Thyroid gland (tissue), 4 donors: ENCODE measurements at regions of chr14 and their contacts with region 1.

Region 1: GRCh38 chr14:77799863-77800730 is at the start of gene ADCK1:
- DNase-seq: peak; percentile 98
- H3K4me3 ChIP-seq: peak within 1 kb of the TSS; percentile 50 to 83 (median 63)
- H3K27ac ChIP-seq: peak within 1 kb of the TSS; percentile 76 to 93 (median 90)
- H3K4me1 ChIP-seq: peaks cover 5 to 20% of the 10 kb centered on the region in 2 donors
- H3K27me3 ChIP-seq: no peaks in the 10 kb centered on the region
- CTCF ChIP-seq: peak in 4 of 6 experiments; percentile 50 to 71 (median 64)
- POLR2A ChIP-seq: peak in 1 of 2 donors; percentile 73
- total RNA-seq, gene ADCK1: 4.0 to 13.5 (median 12.1) TPM

Region 2: GRCh38 chr14:77760381-77761246 is 39.5 kb before region 1 on chr14 and contains the start of gene SNW1:
- intact Hi-C with region 1: loop called (anchors 5 kb)
- DNase-seq: peak; percentile 92 to 94
- H3K4me3 ChIP-seq: peak within 1 kb of the TSS; percentile 43 to 100 (median 75)
- H3K27ac ChIP-seq: peak within 1 kb of the TSS; percentile 87 to 94 (median 91)
- H3K4me1 ChIP-seq: peaks cover 22 to 29% of the 10 kb centered on the region in 2 donors
- H3K27me3 ChIP-seq: no peaks in the 10 kb centered on the region
- CTCF ChIP-seq: no peak
- POLR2A ChIP-seq: peak; percentile 7 to 75
- total RNA-seq, gene SNW1: 53.9 to 85.5 (median 67.8) TPM

Region 3: GRCh38 chr14:77862154-77862786 is 62.2 kb after region 1 on chr14:
- intact Hi-C with region 1: no loop called
- DNase-seq: peak; percentile 79 to 82
- H3K4me3 ChIP-seq: no peak overlapping the region
- H3K27ac ChIP-seq: peak overlapping the region in 2 of 3 donors; percentile 0 to 29
- H3K4me1 ChIP-seq: peaks cover 0 to 5% of the 10 kb centered on the region in 2 donors
- H3K27me3 ChIP-seq: no peaks in the 10 kb centered on the region
- CTCF ChIP-seq: peak; percentile 91 to 98 (median 93)
- POLR2A ChIP-seq: no peak